Kidney (tissue), 22 donors: ENCODE measurements at regions of chr22 and their contacts with region 1.

Region 1: GRCh38 chr22:28600546-28601143 is 79.0 kb downstream of the TTC28 start:
- DNase-seq: peak in 2 of 5 donors; percentile 79 to 83
- H3K4me3 ChIP-seq: no peak overlapping the region
- H3K27ac ChIP-seq: no peak overlapping the region
- H3K4me1 ChIP-seq: no peaks in the 10 kb centered on the region
- H3K27me3 ChIP-seq: no peaks in the 10 kb centered on the region
- CTCF ChIP-seq: peak; percentile 37

Region 2: GRCh38 chr22:28829358-28830181 is 228.9 kb after region 1 on chr22:
- intact Hi-C with region 1: loop called (anchors 5 kb)
- DNase-seq: peak; percentile 77 to 86 (median 84)
- H3K4me3 ChIP-seq: no peak overlapping the region
- H3K27ac ChIP-seq: no peak overlapping the region
- H3K4me1 ChIP-seq: peaks cover 0 to 2% (median 0%) of the 10 kb centered on the region in 3 donors
- H3K27me3 ChIP-seq: no peaks in the 10 kb centered on the region
- CTCF ChIP-seq: peak; percentile 96